Activated CD4-positive, alpha-beta T cell treated with anti-CD3 and anti-CD28 coated beads for 36 hours (primary cell): ENCODE measurements at regions of chr2 and their contacts with region 1.

Region 1: DNA sequence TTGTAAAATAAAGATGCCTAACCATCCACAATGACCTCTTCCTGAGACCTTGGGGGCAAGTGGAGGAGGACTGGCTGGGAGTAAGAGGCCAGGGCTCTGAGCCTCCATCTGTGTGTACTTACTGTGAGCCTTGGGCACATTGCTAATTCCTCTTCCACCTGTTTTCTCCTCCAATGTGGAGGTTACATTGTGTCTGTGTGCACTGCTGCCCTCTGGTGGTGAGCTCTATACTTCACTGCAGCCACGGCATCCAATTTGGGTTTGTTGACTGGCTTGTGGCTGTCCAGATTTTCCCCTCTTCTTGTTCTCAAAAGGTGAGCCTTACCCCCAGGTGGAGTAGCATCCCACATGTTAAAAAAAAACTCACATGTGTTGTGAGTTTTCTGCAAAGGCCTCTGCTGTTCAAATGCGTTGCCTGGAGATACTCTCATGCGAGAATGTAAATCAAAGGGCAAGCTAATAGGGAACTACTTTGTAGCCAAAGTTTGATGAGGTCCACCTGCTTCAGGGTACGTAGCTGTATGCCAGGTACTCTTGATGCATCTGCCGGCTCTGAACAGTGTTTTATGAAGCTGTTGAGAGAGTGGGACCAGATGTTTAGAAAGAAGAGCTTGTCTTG is 80.8 kb downstream of the APOB start:
- DNase-seq: peak; percentile 84
- ATAC-seq: peak; percentile 68
- H3K4me3 Mint-ChIP-seq: no peak overlapping the region
- H3K27ac Mint-ChIP-seq: no peak overlapping the region
- H3K4me1 Mint-ChIP-seq: no peaks in the 10 kb centered on the region
- H3K27me3 Mint-ChIP-seq: peaks cover 11% of the 10 kb centered on the region

Region 2: GRCh38 chr2:20446917-20447436 is 516.1 kb before region 1 on chr2 and contains the start of gene RHOB:
- CTCF ChIA-PET with region 1: no interaction called
- POLR2A ChIA-PET with region 1: no interaction called
- intact Hi-C with region 1: loop called (anchors 5 to 10 kb)
- DNase-seq: peak; percentile 93
- ATAC-seq: peak; percentile 99
- H3K4me3 Mint-ChIP-seq: peak within 1 kb of the TSS; percentile 71
- H3K27ac Mint-ChIP-seq: no peak within 1 kb of the TSS
- H3K4me1 Mint-ChIP-seq: no peaks in the 10 kb centered on the region
- H3K27me3 Mint-ChIP-seq: peaks cover 23% of the 10 kb centered on the region
- total RNA-seq, gene RHOB: 7.5 TPM

Region 3: GRCh38 chr2:20675701-20676352 is 287.2 kb before region 1 on chr2:
- CTCF ChIA-PET with region 1: interaction called, 14 read pairs
- POLR2A ChIA-PET with region 1: no interaction called
- intact Hi-C with region 1: no loop called
- DNase-seq: no peak
- ATAC-seq: peak; percentile 83
- H3K4me3 Mint-ChIP-seq: no peak overlapping the region
- H3K27ac Mint-ChIP-seq: no peak overlapping the region
- H3K4me1 Mint-ChIP-seq: no peaks in the 10 kb centered on the region
- H3K27me3 Mint-ChIP-seq: peaks cover 13% of the 10 kb centered on the region

Region 4: GRCh38 chr2:20682167-20682920 is 280.7 kb before region 1 on chr2:
- CTCF ChIA-PET with region 1: interaction called, 14 read pairs
- POLR2A ChIA-PET with region 1: no interaction called
- intact Hi-C with region 1: loop called in 1 of 2 experiments (anchors 1 kb)
- DNase-seq: no peak
- ATAC-seq: no peak
- H3K4me3 Mint-ChIP-seq: no peak overlapping the region
- H3K27ac Mint-ChIP-seq: no peak overlapping the region
- H3K4me1 Mint-ChIP-seq: no peaks in the 10 kb centered on the region
- H3K27me3 Mint-ChIP-seq: no peaks in the 10 kb centered on the region

Region 5: DNA sequence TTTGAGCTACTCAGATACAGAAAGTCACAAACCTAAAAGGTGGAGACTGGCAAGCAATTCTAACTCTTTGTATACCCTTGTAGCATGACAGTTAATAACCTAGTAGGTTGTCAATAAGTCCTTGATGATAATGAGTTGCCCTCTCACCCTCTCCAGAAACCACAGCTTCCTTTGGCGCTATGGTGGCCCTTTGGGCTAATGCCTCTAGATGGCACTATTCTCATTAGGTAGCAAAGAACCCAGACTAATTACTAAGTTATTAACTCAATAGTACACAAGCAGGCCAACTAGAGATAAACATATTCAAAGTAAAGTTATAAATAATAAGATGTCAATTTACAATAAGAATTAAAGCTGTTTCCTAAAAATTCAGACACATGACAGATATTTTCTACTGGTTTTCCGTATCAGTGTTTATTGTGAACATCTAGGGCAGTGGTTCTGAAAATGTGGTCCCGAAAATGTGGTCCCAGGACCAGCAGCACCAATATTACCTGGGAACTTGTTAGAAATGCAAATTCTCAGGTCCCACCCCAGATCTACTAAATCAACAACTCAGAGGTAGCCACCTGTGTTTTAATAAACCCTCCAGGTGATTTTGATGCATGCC is 181.3 kb before region 1 on chr2:
- CTCF ChIA-PET with region 1: interaction called, 21 read pairs
- POLR2A ChIA-PET with region 1: no interaction called
- intact Hi-C with region 1: loop called (anchors 1 kb)
- DNase-seq: peak; percentile 27
- ATAC-seq: peak; percentile 23
- H3K4me3 Mint-ChIP-seq: no peak overlapping the region
- H3K27ac Mint-ChIP-seq: no peak overlapping the region
- H3K4me1 Mint-ChIP-seq: no peaks in the 10 kb centered on the region
- H3K27me3 Mint-ChIP-seq: no peaks in the 10 kb centered on the region